SK-N-SH (cell line): ENCODE measurements at regions of chr17 and their contacts with region 1.

Region 1: GRCh38 chr17:67376737-67377487 is at the start of gene PITPNC1:
- DNase-seq: peak; percentile 94
- H3K4me3 ChIP-seq: peak within 1 kb of the TSS; percentile 74 to 95
- H3K27ac ChIP-seq: peak within 1 kb of the TSS; percentile 97 to 98
- H3K4me1 ChIP-seq: peaks cover 16 to 21% of the 10 kb centered on the region in 2 experiments; a peak in 3 of 4 replicates
- H3K27me3 ChIP-seq: no peaks in the 10 kb centered on the region
- CTCF ChIP-seq: no peak
- EP300 ChIP-seq: no peak; a peak in 1 of 4 replicates
- RAD21 ChIP-seq: 0 out of 2 replicates have a peak, but pooled peaks have one; percentile 16
- polyA plus RNA-seq, gene PITPNC1: 14.0 and 18.4 TPM in 2 replicates

Region 2: DNA sequence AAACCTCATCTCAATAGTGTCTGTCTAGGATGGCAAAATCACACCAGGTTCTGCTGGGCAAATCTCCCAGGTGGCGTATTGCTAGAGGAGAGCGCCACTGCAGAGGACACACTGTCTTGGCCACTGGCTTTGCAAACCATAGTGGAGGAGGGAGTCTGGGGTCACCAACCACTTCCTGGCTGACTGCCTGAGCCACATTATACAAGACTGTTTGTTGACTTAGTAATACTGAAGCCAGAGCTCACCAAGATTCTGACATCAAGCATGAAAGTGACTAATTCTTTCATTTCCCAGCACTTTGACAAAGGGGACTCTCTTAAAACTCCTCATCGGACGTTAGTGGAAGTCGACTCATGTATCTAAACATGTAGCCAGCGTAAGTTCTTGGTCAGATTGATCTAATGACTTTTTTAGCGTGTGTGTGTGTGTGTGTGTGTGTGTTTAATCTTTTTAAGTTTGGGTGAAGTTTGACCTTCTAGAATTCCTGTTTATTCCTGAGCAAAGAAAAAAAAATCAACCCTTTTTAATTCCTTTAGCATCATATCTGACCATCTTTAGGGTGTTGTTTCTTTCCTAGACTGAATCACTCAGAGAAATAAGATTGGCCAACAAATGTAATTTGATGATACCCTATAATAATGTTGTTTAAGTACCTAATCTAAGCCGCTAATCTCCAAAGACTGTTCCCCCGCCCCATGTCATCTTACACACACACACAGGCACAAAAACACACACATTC is 13.9 kb after region 1 on chr17:
- CTCF ChIA-PET with region 1: interaction called, 95 read pairs
- POLR2A ChIA-PET with region 1: no interaction called
- DNase-seq: no peak
- H3K4me3 ChIP-seq: no peak overlapping the region
- H3K27ac ChIP-seq: peak overlapping the region in 1 of 2 experiments; percentile 93; a peak in 3 of 4 replicates
- H3K4me1 ChIP-seq: peaks cover 11 to 12% of the 10 kb centered on the region in 2 experiments
- H3K27me3 ChIP-seq: no peaks in the 10 kb centered on the region
- CTCF ChIP-seq: no peak; the same call in 1 of the 2 replicates
- EP300 ChIP-seq: peak in 1 of 2 experiments; percentile 67; a peak in 1 of 4 replicates
- RAD21 ChIP-seq: no peak

Region 3: GRCh38 chr17:67469208-67469895 is 92.4 kb after region 1 on chr17:
- CTCF ChIA-PET with region 1: interaction called, 284 read pairs
- POLR2A ChIA-PET with region 1: interaction called, 4 read pairs
- DNase-seq: peak; percentile 84
- H3K4me3 ChIP-seq: no peak overlapping the region
- H3K27ac ChIP-seq: peak overlapping the region in 1 of 2 experiments; percentile 73; a peak in 2 of 4 replicates
- H3K4me1 ChIP-seq: peaks cover 3 to 28% of the 10 kb centered on the region in 2 experiments; a peak in 3 of 4 replicates
- H3K27me3 ChIP-seq: no peaks in the 10 kb centered on the region
- CTCF ChIP-seq: no peak
- EP300 ChIP-seq: peak in 1 of 2 experiments; percentile 46; a peak in 1 of 4 replicates
- RAD21 ChIP-seq: no peak

Region 4: GRCh38 chr17:67594115-67594880 is 217.4 kb after region 1 on chr17:
- CTCF ChIA-PET with region 1: interaction called, 18 read pairs
- POLR2A ChIA-PET with region 1: no interaction called
- DNase-seq: no peak
- H3K4me3 ChIP-seq: no peak overlapping the region
- H3K27ac ChIP-seq: no peak overlapping the region
- H3K4me1 ChIP-seq: peaks cover 0 to under 1% of the 10 kb centered on the region in 2 experiments; a peak in 1 of 4 replicates
- H3K27me3 ChIP-seq: no peaks in the 10 kb centered on the region
- CTCF ChIP-seq: no peak
- EP300 ChIP-seq: no peak
- RAD21 ChIP-seq: no peak

Region 5: DNA sequence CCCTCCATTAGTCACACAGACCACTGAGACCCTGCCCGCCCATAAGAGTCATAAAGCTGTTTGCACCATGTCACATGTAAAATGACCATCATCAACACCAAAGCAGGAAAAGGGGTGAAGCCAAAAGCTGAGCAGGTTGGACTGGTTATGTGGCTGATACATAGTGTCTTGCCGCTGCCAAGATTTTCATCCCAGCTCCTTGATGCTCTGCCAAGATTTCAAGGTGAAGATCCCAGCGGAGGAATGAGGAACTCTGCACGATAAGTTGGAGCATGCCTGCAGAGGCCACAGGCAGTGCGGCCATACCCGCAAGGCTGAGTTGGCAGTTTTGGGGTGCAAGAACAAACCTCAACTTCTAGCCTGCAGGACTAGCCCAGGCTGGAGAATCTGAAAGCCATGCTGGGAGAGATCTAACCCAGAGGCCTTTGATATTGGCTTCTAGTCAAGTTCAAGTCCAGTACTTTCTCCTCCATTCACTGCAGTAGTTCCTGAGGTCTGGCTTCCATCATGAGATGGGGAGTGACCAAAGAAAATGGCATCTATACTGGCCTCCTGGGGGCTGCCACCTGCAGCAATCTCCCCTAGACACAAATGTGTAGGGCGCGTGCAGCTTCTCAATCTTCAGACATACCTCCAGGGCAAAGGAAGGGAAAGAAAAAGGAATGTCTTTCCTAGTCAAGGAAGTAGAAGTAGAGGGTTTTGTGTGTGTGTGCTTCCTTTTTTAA is 261.2 kb after region 1 on chr17:
- CTCF ChIA-PET with region 1: interaction called, 14 read pairs
- POLR2A ChIA-PET with region 1: interaction called, 4 read pairs
- DNase-seq: no peak
- H3K4me3 ChIP-seq: no peak overlapping the region
- H3K27ac ChIP-seq: no peak overlapping the region
- H3K4me1 ChIP-seq: no peaks in the 10 kb centered on the region; a peak in 1 of 4 replicates
- H3K27me3 ChIP-seq: no peaks in the 10 kb centered on the region
- CTCF ChIP-seq: no peak
- EP300 ChIP-seq: no peak
- RAD21 ChIP-seq: no peak

Region 6: GRCh38 chr17:67696853-67697505 is 320.1 kb after region 1 on chr17:
- CTCF ChIA-PET with region 1: interaction called, 34 read pairs
- POLR2A ChIA-PET with region 1: no interaction called
- DNase-seq: no peak
- H3K4me3 ChIP-seq: no peak overlapping the region
- H3K27ac ChIP-seq: 0 out of 4 replicates have a peak overlapping the region, but pooled peaks of 1 of the 2 experiments have one; percentile 4
- H3K4me1 ChIP-seq: no peaks in the 10 kb centered on the region
- H3K27me3 ChIP-seq: no peaks in the 10 kb centered on the region
- CTCF ChIP-seq: no peak
- EP300 ChIP-seq: no peak
- RAD21 ChIP-seq: no peak